ENCODE measurements at regions of chr15 and their contacts with region 1.

Region 1: DNA sequence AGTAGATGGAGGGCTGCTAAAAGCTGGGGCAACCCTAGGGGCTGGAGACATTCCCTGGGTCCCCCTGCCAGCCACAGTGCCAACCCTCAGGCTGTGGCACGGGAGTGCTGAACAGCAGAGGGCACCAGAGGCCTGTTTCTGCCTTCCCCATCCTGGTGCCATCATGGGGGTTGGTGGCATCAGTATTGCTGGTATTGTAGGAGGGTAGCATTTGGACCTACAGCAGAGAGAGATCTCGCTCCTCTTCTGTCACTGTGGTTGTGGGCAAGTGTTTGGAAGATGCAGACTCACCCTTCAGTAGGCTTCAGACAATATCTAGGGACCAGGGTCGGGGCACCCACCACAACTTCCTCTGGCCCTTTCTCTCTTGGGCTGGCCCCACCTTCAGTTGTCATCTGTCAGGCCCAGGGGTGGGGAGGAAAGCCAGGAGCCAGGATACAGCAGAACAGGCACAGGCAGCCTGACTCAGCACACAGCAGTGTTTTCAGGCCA is 123.5 kb downstream of the RPLP1 start:
- DNase-seq: peak; percentile 48 to 83 (median 54)
- ATAC-seq: peak; percentile 70 to 89 (median 88)
- H3K4me3 ChIP-seq: no peak overlapping the region
- H3K27ac ChIP-seq: no peak overlapping the region
- H3K4me1 ChIP-seq: peaks cover 0 to 24% (median 0%) of the 10 kb centered on the region in 12 donors
- H3K27me3 ChIP-seq: peaks cover 0 to 19% (median 0%) of the 10 kb centered on the region in 9 donors
- CTCF ChIP-seq: peak; percentile 46 to 79 (median 66)
- POLR2A ChIP-seq: no peak

Region 2: DNA sequence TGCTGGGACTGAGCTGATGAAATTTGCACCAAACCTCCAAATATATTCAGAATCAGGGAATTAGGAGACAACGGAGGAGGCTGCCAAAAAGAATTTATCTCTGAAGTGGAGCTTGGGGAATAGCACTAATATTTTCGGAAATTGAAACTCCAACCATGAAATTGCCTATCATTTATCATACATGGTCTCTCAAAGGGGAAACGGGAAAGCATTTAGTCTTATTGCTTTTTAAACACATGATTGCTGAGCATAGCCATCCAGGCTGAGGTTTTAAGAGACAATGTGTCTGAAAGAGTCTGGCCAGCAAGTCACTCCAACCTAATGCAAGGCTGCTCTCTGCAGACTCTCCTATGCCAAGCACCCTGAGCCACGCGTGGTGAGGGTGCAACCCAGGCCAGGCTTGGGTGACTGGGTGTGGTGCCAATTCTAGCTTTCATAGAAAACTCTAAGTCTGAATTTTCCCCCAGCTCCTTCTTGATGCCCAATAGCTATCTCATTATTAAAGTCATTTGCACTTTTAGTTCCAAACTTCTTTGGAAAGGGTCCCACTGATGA is 76.7 kb after region 1 on chr15:
- intact Hi-C with region 1: loop called in 2 of 10 experiments (anchors 2 to 5 kb)
- DNase-seq: no peak
- ATAC-seq: peak in 1 of 4 donors; percentile 62
- H3K4me3 ChIP-seq: no peak overlapping the region
- H3K27ac ChIP-seq: no peak overlapping the region
- H3K4me1 ChIP-seq: peaks cover 0 to 5% (median 0%) of the 10 kb centered on the region in 12 donors
- H3K27me3 ChIP-seq: peaks cover 0 to 63% (median 4%) of the 10 kb centered on the region in 9 donors
- CTCF ChIP-seq: peak in 5 of 12 donors; percentile 10 to 32 (median 19)
- POLR2A ChIP-seq: no peak

Region 3: DNA sequence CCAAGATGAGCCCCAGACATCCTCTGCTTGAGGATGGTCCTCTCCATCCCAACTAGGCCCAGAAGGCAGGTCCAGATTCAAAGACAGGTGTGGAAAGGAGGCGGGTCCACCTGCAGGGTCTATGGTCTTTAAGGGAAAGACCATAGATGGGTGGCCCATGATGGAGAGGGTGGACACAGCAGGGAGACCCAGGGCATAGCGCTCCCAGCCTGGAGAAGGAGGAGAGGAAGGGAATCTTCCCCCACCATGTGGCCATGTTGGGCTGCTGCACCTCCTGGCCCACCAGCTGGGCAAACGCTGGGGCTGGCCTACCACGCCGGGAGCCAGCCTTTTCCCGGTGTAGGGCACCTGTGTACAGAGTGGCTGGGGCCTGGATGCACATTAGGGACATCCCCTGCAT is 786.8 kb after region 1 on chr15:
- intact Hi-C with region 1: loop called in 4 of 10 experiments (anchors 5 to 10 kb)
- DNase-seq: peak in 4 of 5 donors; percentile 35 to 70 (median 40)
- ATAC-seq: peak in 3 of 4 donors; percentile 82 to 89 (median 87)
- H3K4me3 ChIP-seq: no peak overlapping the region
- H3K27ac ChIP-seq: no peak overlapping the region
- H3K4me1 ChIP-seq: no peaks in the 10 kb centered on the region
- H3K27me3 ChIP-seq: peaks cover 0 to 16% (median 0%) of the 10 kb centered on the region in 9 donors
- CTCF ChIP-seq: peak; percentile 68 to 82 (median 71)
- POLR2A ChIP-seq: no peak

Region 4: GRCh38 chr15:70466895-70467529 is 890.9 kb after region 1 on chr15:
- intact Hi-C with region 1: loop called in 6 of 10 experiments (anchors 5 to 10 kb)
- DNase-seq: peak in 4 of 5 donors; percentile 33 to 68 (median 41)
- ATAC-seq: peak; percentile 62 to 84 (median 74)
- H3K4me3 ChIP-seq: no peak overlapping the region
- H3K27ac ChIP-seq: no peak overlapping the region
- H3K4me1 ChIP-seq: peaks cover 0 to 15% (median 0%) of the 10 kb centered on the region in 12 donors
- H3K27me3 ChIP-seq: peaks cover 0 to 23% (median 2%) of the 10 kb centered on the region in 9 donors
- CTCF ChIP-seq: peak; percentile 39 to 71 (median 50)
- POLR2A ChIP-seq: no peak

Region 5: GRCh38 chr15:70488002-70488605 is 912.0 kb after region 1 on chr15:
- intact Hi-C with region 1: loop called in 4 of 10 experiments (anchors 2 to 5 kb)
- DNase-seq: peak; percentile 58 to 82 (median 62)
- ATAC-seq: peak; percentile 29 to 75 (median 60)
- H3K4me3 ChIP-seq: no peak overlapping the region
- H3K27ac ChIP-seq: peak overlapping the region in 1 of 12 donors; percentile 76
- H3K4me1 ChIP-seq: peaks cover 0 to 74% (median 0%) of the 10 kb centered on the region in 12 donors
- H3K27me3 ChIP-seq: peaks cover 0 to 6% (median 0%) of the 10 kb centered on the region in 9 donors
- CTCF ChIP-seq: peak; percentile 91 to 97 (median 95)
- POLR2A ChIP-seq: no peak